ENCODE measurements at regions of chr3 and their contacts with region 1.

Region 1: DNA sequence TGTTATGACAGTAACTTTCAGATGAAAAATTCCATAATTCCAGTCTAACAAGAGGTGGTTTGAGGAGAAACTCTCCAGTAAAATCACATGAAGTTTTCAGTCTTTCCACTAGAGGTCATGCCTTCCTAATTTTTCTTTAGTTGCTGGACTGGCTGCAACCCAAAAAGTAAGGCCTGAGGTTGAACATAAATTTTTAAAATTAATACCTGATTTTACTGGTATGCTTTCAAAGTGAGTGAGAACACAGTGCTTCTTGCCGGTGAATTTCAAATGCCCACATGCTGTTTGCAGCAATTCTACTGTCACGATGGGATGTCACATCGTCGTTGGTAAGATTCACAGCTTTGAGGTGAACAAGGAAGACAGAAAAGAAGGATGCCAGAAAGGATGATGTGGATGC is 89.0 kb upstream of the FGF12 start:
- DNase-seq: peak; percentile 71
- H3K4me3 ChIP-seq: no peak overlapping the region
- H3K27ac ChIP-seq: no peak overlapping the region
- H3K4me1 ChIP-seq: no peaks in the 10 kb centered on the region
- H3K27me3 ChIP-seq: no peaks in the 10 kb centered on the region
- CTCF ChIP-seq: peak; percentile 73

Region 2: GRCh38 chr3:192917404-192918274 is 101.3 kb after region 1 on chr3 and contains the start of gene MB21D2:
- CTCF ChIA-PET with region 1: interaction called, 5 read pairs
- POLR2A ChIA-PET with region 1: no interaction called
- intact Hi-C with region 1: loop called (anchors 1 kb)
- DNase-seq: peak; percentile 91
- H3K4me3 ChIP-seq: peak within 1 kb of the TSS; percentile 61
- H3K27ac ChIP-seq: peak within 1 kb of the TSS; percentile 86
- H3K4me1 ChIP-seq: peaks cover 26% of the 10 kb centered on the region
- H3K27me3 ChIP-seq: no peaks in the 10 kb centered on the region
- CTCF ChIP-seq: 0 out of 2 replicates have a peak, but pooled peaks have one; percentile 13
- total RNA-seq, gene MB21D2: 6.1 and 8.1 TPM in 2 replicates

Region 3: GRCh38 chr3:193040836-193041672 is 224.7 kb after region 1 on chr3:
- CTCF ChIA-PET with region 1: interaction called, 20 read pairs
- POLR2A ChIA-PET with region 1: no interaction called
- intact Hi-C with region 1: loop called (anchors 1 kb)
- DNase-seq: peak; percentile 54
- H3K4me3 ChIP-seq: no peak overlapping the region
- H3K27ac ChIP-seq: no peak overlapping the region
- H3K4me1 ChIP-seq: no peaks in the 10 kb centered on the region
- H3K27me3 ChIP-seq: no peaks in the 10 kb centered on the region
- CTCF ChIP-seq: peak; percentile 67

Region 4: GRCh38 chr3:193190146-193190786 is 373.9 kb after region 1 on chr3:
- CTCF ChIA-PET with region 1: no interaction called
- POLR2A ChIA-PET with region 1: no interaction called
- intact Hi-C with region 1: loop called (anchors 5 kb)
- DNase-seq: peak; percentile 62
- H3K4me3 ChIP-seq: no peak overlapping the region
- H3K27ac ChIP-seq: no peak overlapping the region
- H3K4me1 ChIP-seq: no peaks in the 10 kb centered on the region
- H3K27me3 ChIP-seq: no peaks in the 10 kb centered on the region
- CTCF ChIP-seq: peak; percentile 69

Region 5: GRCh38 chr3:193465992-193466608 is 649.7 kb after region 1 on chr3:
- CTCF ChIA-PET with region 1: no interaction called
- POLR2A ChIA-PET with region 1: no interaction called
- intact Hi-C with region 1: loop called (anchors 2 kb)
- DNase-seq: no peak
- H3K4me3 ChIP-seq: no peak overlapping the region
- H3K27ac ChIP-seq: no peak overlapping the region
- H3K4me1 ChIP-seq: peaks cover 6% of the 10 kb centered on the region
- H3K27me3 ChIP-seq: no peaks in the 10 kb centered on the region
- CTCF ChIP-seq: no peak

Measured in A673 (cell line).